ENCODE measurements at regions of chr6 and their contacts with region 1.

Region 1: GRCh38 chr6:83057705-83058321 is 7.8 kb downstream of the UBE3D start:
- DNase-seq: peak; percentile 55
- ATAC-seq: peak; percentile 62
- H3K4me3 ChIP-seq: no peak overlapping the region
- H3K27ac ChIP-seq: no peak overlapping the region
- H3K4me1 ChIP-seq: peaks cover 2% of the 10 kb centered on the region; the same call in 1 of the 2 replicates
- H3K27me3 ChIP-seq: no peaks in the 10 kb centered on the region
- CTCF ChIP-seq: peak; percentile 79
- POLR2A ChIP-seq: no peak
- RAD21 ChIP-seq: peak; percentile 84

Region 2: GRCh38 chr6:82270881-82271645 is 786.8 kb before region 1 on chr6:
- CTCF ChIA-PET with region 1: interaction called, 7 read pairs
- POLR2A ChIA-PET with region 1: no interaction called
- dilution Hi-C with region 1: no loop called
- in situ Hi-C with region 1: no loop called
- intact Hi-C with region 1: loop called (anchors 1 kb)
- DNase-seq: peak; percentile 52
- ATAC-seq: no peak
- H3K4me3 ChIP-seq: no peak overlapping the region
- H3K27ac ChIP-seq: no peak overlapping the region
- H3K4me1 ChIP-seq: no peaks in the 10 kb centered on the region
- H3K27me3 ChIP-seq: peaks cover 5% of the 10 kb centered on the region; the same call in 1 of the 2 replicates
- CTCF ChIP-seq: peak; percentile 75
- POLR2A ChIP-seq: no peak
- RAD21 ChIP-seq: peak; percentile 79

Region 3: GRCh38 chr6:82363351-82364086 is 694.3 kb before region 1 on chr6 and contains the start of gene TPBG:
- CTCF ChIA-PET with region 1: no interaction called
- POLR2A ChIA-PET with region 1: no interaction called
- dilution Hi-C with region 1: no loop called
- in situ Hi-C with region 1: loop called (anchors 25 kb)
- intact Hi-C with region 1: loop called (anchors 1 kb)
- DNase-seq: peak; percentile 82
- ATAC-seq: peak; percentile 67
- H3K4me3 ChIP-seq: peak within 1 kb of the TSS; percentile 68
- H3K27ac ChIP-seq: peak within 1 kb of the TSS; percentile 98
- H3K4me1 ChIP-seq: peaks cover 8% of the 10 kb centered on the region
- H3K27me3 ChIP-seq: no peaks in the 10 kb centered on the region
- CTCF ChIP-seq: peak; percentile 34
- POLR2A ChIP-seq: peak; percentile 92
- RAD21 ChIP-seq: peak; percentile 23; the same call in 1 of the 2 replicates
- total RNA-seq, gene TPBG: 19.7 and 20.0 TPM in 2 replicates

Region 4: DNA sequence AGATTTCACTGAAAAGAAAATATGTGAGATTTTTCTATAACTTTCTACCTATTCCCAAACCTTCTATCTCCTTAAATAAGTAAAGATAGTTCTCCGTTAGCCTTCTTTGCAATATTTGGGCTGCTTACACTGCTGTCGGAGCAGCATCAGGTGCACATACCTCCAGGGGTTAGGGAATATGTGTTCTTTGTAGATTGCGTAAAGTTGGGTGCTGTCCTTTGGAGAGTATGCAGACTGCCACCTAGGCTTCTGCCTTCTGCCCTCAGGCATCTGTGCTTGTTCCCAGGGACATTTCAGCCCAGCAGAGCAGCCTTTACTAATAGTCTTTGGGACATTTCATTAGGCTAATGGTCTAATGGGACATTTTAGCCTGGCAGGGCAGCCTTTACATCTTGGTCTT is 433.6 kb before region 1 on chr6:
- CTCF ChIA-PET with region 1: no interaction called
- POLR2A ChIA-PET with region 1: no interaction called
- dilution Hi-C with region 1: no loop called
- in situ Hi-C with region 1: no loop called
- intact Hi-C with region 1: loop called (anchors 10 kb)
- DNase-seq: no peak
- ATAC-seq: no peak
- H3K4me3 ChIP-seq: no peak overlapping the region
- H3K27ac ChIP-seq: no peak overlapping the region
- H3K4me1 ChIP-seq: no peaks in the 10 kb centered on the region
- H3K27me3 ChIP-seq: no peaks in the 10 kb centered on the region
- CTCF ChIP-seq: no peak
- POLR2A ChIP-seq: no peak
- RAD21 ChIP-seq: no peak